ENCODE measurements at regions of chr11 and their contacts with region 1.

Region 1: DNA sequence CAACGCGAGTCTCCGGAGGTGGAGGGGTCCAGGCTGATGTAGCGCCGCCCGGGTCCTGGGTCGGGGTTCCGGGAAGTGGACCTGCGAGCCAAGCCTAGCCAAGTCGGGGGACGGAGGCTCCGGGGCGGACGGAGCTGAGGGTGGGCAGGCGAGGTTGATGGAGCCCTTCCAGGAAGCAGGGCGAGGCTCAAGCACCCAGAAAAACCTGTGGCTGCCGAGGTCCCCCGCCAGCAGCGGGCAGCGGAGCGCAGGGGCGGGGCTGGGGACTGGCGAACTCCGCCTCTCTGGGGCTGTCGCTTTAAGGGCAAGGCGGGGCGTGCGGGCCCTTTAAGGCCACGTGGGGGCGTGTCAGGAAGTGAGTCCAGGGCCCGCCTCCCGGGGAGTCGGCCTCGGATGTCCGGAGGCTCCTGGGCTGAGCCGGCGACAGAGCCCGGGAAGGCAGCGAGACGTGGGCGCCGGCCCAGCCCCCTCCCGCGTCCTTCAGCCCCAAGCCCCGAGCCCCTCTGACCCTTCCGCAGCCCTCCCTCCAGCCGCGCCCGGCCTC is at the start of gene SLC35C1:
- DNase-seq: peak; percentile 98
- H3K4me3 Mint-ChIP-seq: peak within 1 kb of the TSS; percentile 96
- H3K27ac Mint-ChIP-seq: peak within 1 kb of the TSS; percentile 84
- H3K4me1 Mint-ChIP-seq: peaks cover 16% of the 10 kb centered on the region
- H3K27me3 Mint-ChIP-seq: no peaks in the 10 kb centered on the region
- CTCF ChIP-seq: no peak
- total RNA-seq, gene SLC35C1: 18.1 and 20.5 TPM in 2 replicates

Region 2: DNA sequence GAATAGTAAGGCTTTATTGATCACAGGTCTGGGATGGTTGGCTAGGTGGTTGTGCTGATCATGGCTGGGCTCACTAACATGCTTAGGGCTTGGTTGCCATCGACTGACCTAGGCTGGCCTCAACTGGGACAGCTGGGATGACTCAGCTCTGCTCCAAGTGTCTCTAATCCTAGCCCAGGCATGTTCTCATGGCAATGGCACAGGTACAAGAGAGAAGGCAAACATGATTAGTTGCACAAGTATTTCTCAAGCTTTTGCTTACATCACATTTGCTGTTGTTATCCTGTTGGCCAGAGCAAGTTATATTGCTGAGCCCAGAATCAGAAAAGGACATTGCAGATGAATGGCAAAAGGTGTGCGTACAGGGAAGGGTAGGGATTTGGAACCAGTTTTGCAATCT is 68.4 kb before region 1 on chr11:
- CTCF ChIA-PET with region 1: no interaction called
- intact Hi-C with region 1: no loop called
- DNase-seq: no peak
- H3K4me3 Mint-ChIP-seq: no peak overlapping the region
- H3K27ac Mint-ChIP-seq: no peak overlapping the region
- H3K4me1 Mint-ChIP-seq: no peaks in the 10 kb centered on the region
- H3K27me3 Mint-ChIP-seq: peaks cover 53% of the 10 kb centered on the region
- CTCF ChIP-seq: no peak

Region 3: DNA sequence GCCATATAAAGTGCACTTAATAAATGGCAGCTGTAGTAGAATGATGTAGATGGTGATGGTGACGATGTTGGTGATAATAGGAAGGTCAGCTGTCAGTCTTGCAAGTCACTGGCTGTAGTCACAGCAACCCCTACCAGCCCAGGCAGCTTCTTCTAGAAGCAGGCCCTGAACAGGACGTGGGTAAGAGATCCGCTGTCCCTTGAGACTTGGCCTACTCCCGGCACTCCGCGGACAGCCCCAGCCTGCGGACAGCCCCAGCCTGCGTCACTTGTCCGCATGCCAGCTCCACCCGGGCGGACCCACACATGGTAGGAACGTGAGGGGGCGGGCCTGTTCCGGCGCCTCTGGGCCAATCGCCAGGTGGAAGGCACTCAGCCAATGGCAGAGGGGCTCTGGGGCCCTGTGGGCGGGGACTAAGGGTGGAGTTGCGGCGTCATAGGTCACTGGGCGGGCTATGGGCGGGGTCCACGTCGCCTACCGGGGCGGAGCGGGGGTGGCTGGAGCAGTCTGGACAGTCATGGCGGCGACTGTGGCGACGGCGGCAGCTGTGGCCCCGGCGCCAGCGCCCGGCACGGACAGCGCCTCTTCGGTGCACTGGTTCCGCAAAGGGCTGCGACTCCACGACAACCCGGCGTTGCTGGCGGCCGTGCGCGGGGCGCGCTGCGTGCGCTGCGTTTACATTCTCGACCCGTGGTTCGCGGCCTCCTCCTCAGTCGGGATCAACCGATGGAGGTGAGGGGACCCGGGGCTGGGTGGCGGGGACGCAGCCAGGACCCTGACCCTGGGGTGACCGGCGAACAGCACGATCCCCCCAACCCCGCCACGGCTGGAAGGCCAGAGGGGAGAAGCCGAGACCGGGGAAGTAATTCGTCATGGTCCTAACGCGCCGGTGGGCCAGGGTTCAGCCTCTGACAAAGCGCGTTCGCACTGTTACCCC is 42.4 kb after region 1 on chr11 and contains the start of gene CRY2:
- CTCF ChIA-PET with region 1: interaction called, 6 read pairs
- intact Hi-C with region 1: loop called (anchors 5 kb)
- DNase-seq: peak; percentile 99
- H3K4me3 Mint-ChIP-seq: peak within 1 kb of the TSS; percentile 85
- H3K27ac Mint-ChIP-seq: peak within 1 kb of the TSS; percentile 92
- H3K4me1 Mint-ChIP-seq: peaks cover 33% of the 10 kb centered on the region
- H3K27me3 Mint-ChIP-seq: no peaks in the 10 kb centered on the region
- CTCF ChIP-seq: no peak
- total RNA-seq, gene CRY2: 14.9 and 16.1 TPM in 2 replicates

Measured in Calu3 (cell line).